Heart left ventricle (tissue), 16 donors: ENCODE measurements at regions of chr7 and their contacts with region 1.

Region 1: GRCh38 chr7:7595451-7595850 is 28.8 kb downstream of the MIOS start:
- DNase-seq: no peak
- ATAC-seq: no peak
- H3K4me3 ChIP-seq: no peak overlapping the region
- H3K27ac ChIP-seq: no peak overlapping the region
- H3K4me1 ChIP-seq: peaks cover 0 to 10% (median 0%) of the 10 kb centered on the region in 12 donors
- H3K27me3 ChIP-seq: no peaks in the 10 kb centered on the region
- CTCF ChIP-seq: peak; percentile 14 to 63 (median 32)
- POLR2A ChIP-seq: no peak

Region 2: GRCh38 chr7:7257899-7258692 is 337.4 kb before region 1 on chr7:
- intact Hi-C with region 1: no loop called
- DNase-seq: no peak
- ATAC-seq: peak in 1 of 4 donors; percentile 37
- H3K4me3 ChIP-seq: peak overlapping the region in 1 of 12 donors; percentile 45
- H3K27ac ChIP-seq: peak overlapping the region in 1 of 12 donors; percentile 87
- H3K4me1 ChIP-seq: peaks cover 0 to 39% (median 5%) of the 10 kb centered on the region in 12 donors
- H3K27me3 ChIP-seq: no peaks in the 10 kb centered on the region
- CTCF ChIP-seq: no peak
- POLR2A ChIP-seq: no peak

Region 3: GRCh38 chr7:7424151-7424873 is 171.1 kb before region 1 on chr7:
- intact Hi-C with region 1: no loop called
- DNase-seq: peak; percentile 41 to 58 (median 55)
- ATAC-seq: peak; percentile 58 to 94 (median 86)
- H3K4me3 ChIP-seq: peak overlapping the region; percentile 14 to 65 (median 50)
- H3K27ac ChIP-seq: peak overlapping the region in 1 of 12 donors; percentile 11
- H3K4me1 ChIP-seq: peaks cover 0 to 11% (median 0%) of the 10 kb centered on the region in 12 donors
- H3K27me3 ChIP-seq: no peaks in the 10 kb centered on the region
- CTCF ChIP-seq: peak; percentile 52 to 82 (median 70)
- POLR2A ChIP-seq: no peak

Region 4: DNA sequence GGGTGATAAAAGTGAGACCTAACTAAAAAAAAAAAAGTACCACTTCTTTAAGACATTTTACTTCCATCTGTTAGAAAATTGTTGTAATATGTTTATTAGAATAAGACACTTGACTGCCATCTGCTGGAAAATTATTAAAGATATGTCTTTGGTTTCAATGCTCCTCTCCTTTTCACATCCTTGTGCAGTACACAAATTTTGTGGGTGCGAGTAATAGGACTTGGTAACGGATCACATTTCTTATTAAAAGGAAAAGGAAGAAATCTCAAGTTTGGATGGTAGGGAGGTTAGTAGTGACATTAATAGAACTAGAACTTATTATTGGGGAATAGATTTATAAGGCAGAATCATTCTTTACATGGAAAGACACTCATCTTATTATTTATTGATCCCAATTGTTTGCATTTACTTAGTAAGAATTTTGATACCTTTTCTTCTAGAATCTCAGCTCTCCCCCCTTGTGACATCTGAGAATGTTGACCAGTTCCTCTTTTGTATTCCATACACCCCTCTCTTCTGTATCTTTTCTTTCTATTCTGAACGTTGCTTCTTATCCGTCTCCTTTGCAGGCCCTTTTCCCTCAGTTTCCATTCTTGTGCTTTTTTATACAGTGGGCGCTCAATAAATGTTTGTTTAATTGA is 166.0 kb after region 1 on chr7:
- intact Hi-C with region 1: loop called in 1 of 10 experiments (anchors 5 kb)
- DNase-seq: no peak
- ATAC-seq: peak; percentile 33 to 66 (median 52)
- H3K4me3 ChIP-seq: peak overlapping the region in 10 of 12 donors; percentile 39 to 61 (median 52)
- H3K27ac ChIP-seq: peak overlapping the region in 11 of 12 donors; percentile 9 to 80 (median 68)
- H3K4me1 ChIP-seq: peaks cover 0 to 17% (median 8%) of the 10 kb centered on the region in 12 donors
- H3K27me3 ChIP-seq: no peaks in the 10 kb centered on the region
- CTCF ChIP-seq: peak; percentile 36 to 67 (median 54)
- POLR2A ChIP-seq: no peak

Region 5: DNA sequence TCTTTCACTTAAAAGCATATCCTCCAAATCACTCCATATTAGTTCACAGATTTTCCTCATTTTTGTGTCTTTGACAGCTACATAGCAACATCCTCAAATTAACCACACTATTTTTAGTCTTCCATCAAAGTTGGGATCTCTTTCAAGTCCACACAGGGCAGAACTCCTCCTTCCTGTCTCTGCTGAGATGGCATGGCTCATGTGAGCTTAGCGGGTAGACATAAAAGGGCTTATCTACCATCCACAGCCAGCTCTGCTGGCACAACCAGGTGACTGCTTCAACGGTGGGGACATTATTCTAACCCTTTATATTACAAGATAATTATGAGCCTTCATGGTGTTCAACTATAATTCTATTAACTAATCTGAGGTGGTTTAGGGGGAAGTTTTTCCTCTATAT is 631.0 kb after region 1 on chr7:
- intact Hi-C with region 1: loop called in 1 of 10 experiments (anchors 10 kb)
- DNase-seq: peak in 1 of 5 donors; percentile 38
- ATAC-seq: peak; percentile 78 to 91 (median 86)
- H3K4me3 ChIP-seq: no peak overlapping the region
- H3K27ac ChIP-seq: peak overlapping the region in 5 of 12 donors; percentile 8 to 49 (median 37)
- H3K4me1 ChIP-seq: peaks cover 0 to 13% (median 0%) of the 10 kb centered on the region in 12 donors
- H3K27me3 ChIP-seq: no peaks in the 10 kb centered on the region
- CTCF ChIP-seq: no peak
- POLR2A ChIP-seq: no peak

Region 6: GRCh38 chr7:8284606-8285005 is 689.2 kb after region 1 on chr7:
- intact Hi-C with region 1: loop called in 1 of 10 experiments (anchors 10 kb)
- DNase-seq: peak in 1 of 5 donors; percentile 14
- ATAC-seq: peak in 1 of 4 donors; percentile 9
- H3K4me3 ChIP-seq: no peak overlapping the region
- H3K27ac ChIP-seq: peak overlapping the region; percentile 1 to 90 (median 82)
- H3K4me1 ChIP-seq: peaks cover 0 to 33% (median 8%) of the 10 kb centered on the region in 12 donors
- H3K27me3 ChIP-seq: no peaks in the 10 kb centered on the region
- CTCF ChIP-seq: no peak
- POLR2A ChIP-seq: no peak

Region 7: GRCh38 chr7:8295638-8296361 is 700.3 kb after region 1 on chr7:
- intact Hi-C with region 1: loop called in 4 of 10 experiments (anchors 5 to 10 kb)
- DNase-seq: peak in 2 of 5 donors; percentile 29 to 40
- ATAC-seq: peak; percentile 64 to 97 (median 91)
- H3K4me3 ChIP-seq: no peak overlapping the region
- H3K27ac ChIP-seq: no peak overlapping the region
- H3K4me1 ChIP-seq: peaks cover 0 to 1% (median 0%) of the 10 kb centered on the region in 12 donors
- H3K27me3 ChIP-seq: no peaks in the 10 kb centered on the region
- CTCF ChIP-seq: peak; percentile 55 to 86 (median 76)
- POLR2A ChIP-seq: no peak